Naive thymus-derived CD4-positive, alpha-beta T cell (primary cell): ENCODE measurements at regions of chr2 and their contacts with region 1.

Region 1: DNA sequence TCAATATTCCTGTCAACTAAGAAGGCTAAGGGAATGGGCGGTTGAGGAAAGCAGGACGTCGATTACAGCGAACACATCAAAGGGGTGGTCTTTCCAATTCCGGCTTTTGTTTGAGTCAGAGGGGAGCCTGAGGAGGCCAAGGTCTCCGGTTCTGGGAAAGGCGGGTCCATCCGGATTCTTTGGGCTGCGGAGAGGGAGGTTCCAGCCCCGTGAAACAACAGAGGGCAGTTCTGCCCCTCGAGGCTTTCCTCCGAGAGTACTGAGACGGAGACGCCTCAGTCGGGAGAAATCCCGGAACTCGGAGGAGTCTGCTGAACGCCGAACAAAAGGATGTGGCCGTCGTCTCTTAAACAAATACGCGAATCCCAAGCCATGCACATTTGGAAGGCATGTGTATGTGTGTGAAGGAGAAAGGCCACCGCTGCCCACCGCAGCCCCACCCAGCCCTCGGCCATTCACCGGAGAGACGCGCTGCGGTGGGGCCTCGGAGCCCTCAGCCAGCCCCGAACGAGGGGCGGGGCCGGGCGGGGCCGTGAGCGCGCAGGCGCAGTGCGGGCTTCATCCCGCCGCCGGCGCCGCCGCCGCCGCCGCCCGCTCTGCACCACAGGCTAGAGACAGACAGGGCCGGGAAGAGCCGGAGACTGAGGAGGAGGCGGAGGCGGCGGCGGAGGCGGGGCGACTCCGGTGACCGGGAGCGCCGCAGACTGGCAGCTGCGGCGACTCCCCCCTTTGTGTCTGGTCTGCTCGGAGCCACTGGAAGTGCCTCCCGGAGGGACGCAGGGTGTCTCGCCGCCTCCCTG is at the start of gene BMPR2:
- DNase-seq: peak; percentile 68 to 94 (median 81)
- ATAC-seq: peak; percentile 90
- H3K4me3 ChIP-seq: peak within 1 kb of the TSS; percentile 95
- H3K4me3 Mint-ChIP-seq: peak within 1 kb of the TSS; percentile 94 to 100 (median 98)
- H3K27ac ChIP-seq: peak within 1 kb of the TSS; percentile 81
- H3K27ac Mint-ChIP-seq: peak within 1 kb of the TSS; percentile 82 to 98 (median 92)
- H3K4me1 ChIP-seq: peaks cover 0 to 3% of the 10 kb centered on the region in 2 donors
- H3K4me1 Mint-ChIP-seq: peaks cover 13 to 41% (median 29%) of the 10 kb centered on the region in 7 donors
- H3K27me3 ChIP-seq: no peaks in the 10 kb centered on the region
- H3K27me3 Mint-ChIP-seq: peaks cover 0 to 28% (median 0%) of the 10 kb centered on the region in 5 donors
- total RNA-seq, gene BMPR2: 8.0 to 33.1 (median 15.2) TPM

Region 2: GRCh38 chr2:201780674-201781581 is 594.9 kb before region 1 on chr2 and contains the start of gene ALS2:
- CTCF ChIA-PET with region 1: no interaction called
- POLR2A ChIA-PET with region 1: no interaction called
- intact Hi-C with region 1: loop called (anchors 2 to 5 kb)
- DNase-seq: peak; percentile 91 to 97 (median 95)
- ATAC-seq: peak; percentile 96
- H3K4me3 ChIP-seq: peak within 1 kb of the TSS; percentile 96
- H3K4me3 Mint-ChIP-seq: peak within 1 kb of the TSS; percentile 87 to 99 (median 98)
- H3K27ac ChIP-seq: peak within 1 kb of the TSS; percentile 84
- H3K27ac Mint-ChIP-seq: peak within 1 kb of the TSS; percentile 84 to 99 (median 97)
- H3K4me1 ChIP-seq: peaks cover 7 to 10% of the 10 kb centered on the region in 2 donors
- H3K4me1 Mint-ChIP-seq: peaks cover 5 to 36% (median 21%) of the 10 kb centered on the region in 7 donors
- H3K27me3 ChIP-seq: no peaks in the 10 kb centered on the region
- H3K27me3 Mint-ChIP-seq: peaks cover 0 to 22% (median 0%) of the 10 kb centered on the region in 5 donors
- total RNA-seq, gene ALS2: 8.9 to 13.5 (median 10.7) TPM

Region 3: GRCh38 chr2:202238234-202239197 is 137.3 kb before region 1 on chr2 and contains the start of gene SUMO1:
- CTCF ChIA-PET with region 1: no interaction called
- POLR2A ChIA-PET with region 1: no interaction called
- intact Hi-C with region 1: loop called (anchors 1 to 2 kb)
- DNase-seq: peak; percentile 80 to 95 (median 93)
- ATAC-seq: peak; percentile 98
- H3K4me3 ChIP-seq: peak within 1 kb of the TSS; percentile 82
- H3K4me3 Mint-ChIP-seq: peak within 1 kb of the TSS; percentile 91 to 100 (median 97)
- H3K27ac ChIP-seq: peak within 1 kb of the TSS; percentile 88
- H3K27ac Mint-ChIP-seq: peak within 1 kb of the TSS; percentile 96 to 99 (median 97)
- H3K4me1 ChIP-seq: peaks cover 11% of the 10 kb centered on the region in 2 donors
- H3K4me1 Mint-ChIP-seq: peaks cover 10 to 51% (median 35%) of the 10 kb centered on the region in 7 donors
- H3K27me3 ChIP-seq: no peaks in the 10 kb centered on the region
- H3K27me3 Mint-ChIP-seq: peaks cover 0 to 2% (median 0%) of the 10 kb centered on the region in 5 donors
- total RNA-seq, gene SUMO1: 48.1 to 104 (median 56.8) TPM

Region 4: DNA sequence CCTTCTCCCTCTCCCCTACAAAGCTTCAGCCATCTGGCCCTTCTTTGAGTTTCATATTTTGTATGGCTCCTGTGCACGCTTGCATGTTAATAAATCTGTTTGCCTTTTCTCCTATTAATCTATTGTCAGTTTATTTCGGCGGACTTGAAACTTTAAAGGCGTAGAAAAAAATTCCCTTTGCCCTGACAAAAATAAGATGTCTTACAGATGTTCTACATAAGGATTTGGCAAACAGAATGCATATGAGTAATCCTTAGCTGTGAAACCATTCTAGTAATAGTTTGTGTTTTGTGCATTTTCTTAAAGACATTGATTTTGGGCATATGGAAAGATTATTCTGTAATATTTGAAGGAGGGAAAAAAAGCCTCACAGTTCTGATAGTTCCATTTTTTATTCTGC is 14.7 kb before region 1 on chr2:
- CTCF ChIA-PET with region 1: no interaction called
- POLR2A ChIA-PET with region 1: no interaction called
- intact Hi-C with region 1: no loop called
- DNase-seq: no peak
- ATAC-seq: no peak
- H3K4me3 ChIP-seq: no peak overlapping the region
- H3K4me3 Mint-ChIP-seq: no peak overlapping the region
- H3K27ac ChIP-seq: no peak overlapping the region
- H3K27ac Mint-ChIP-seq: peak overlapping the region in 2 of 9 donors; percentile 5 to 41
- H3K4me1 ChIP-seq: no peaks in the 10 kb centered on the region
- H3K4me1 Mint-ChIP-seq: no peaks in the 10 kb centered on the region
- H3K27me3 ChIP-seq: no peaks in the 10 kb centered on the region
- H3K27me3 Mint-ChIP-seq: peaks cover 0 to 2% (median 0%) of the 10 kb centered on the region in 5 donors

Region 5: GRCh38 chr2:202387608-202388342 is 12.0 kb after region 1 on chr2:
- CTCF ChIA-PET with region 1: no interaction called
- POLR2A ChIA-PET with region 1: no interaction called
- intact Hi-C with region 1: loop called in 1 of 2 experiments (anchors 1 kb)
- DNase-seq: no peak
- ATAC-seq: no peak
- H3K4me3 ChIP-seq: no peak overlapping the region
- H3K4me3 Mint-ChIP-seq: no peak overlapping the region
- H3K27ac ChIP-seq: no peak overlapping the region
- H3K27ac Mint-ChIP-seq: no peak overlapping the region
- H3K4me1 ChIP-seq: no peaks in the 10 kb centered on the region
- H3K4me1 Mint-ChIP-seq: peaks cover 6 to 26% (median 21%) of the 10 kb centered on the region in 7 donors
- H3K27me3 ChIP-seq: no peaks in the 10 kb centered on the region
- H3K27me3 Mint-ChIP-seq: no peaks in the 10 kb centered on the region

Region 6: DNA sequence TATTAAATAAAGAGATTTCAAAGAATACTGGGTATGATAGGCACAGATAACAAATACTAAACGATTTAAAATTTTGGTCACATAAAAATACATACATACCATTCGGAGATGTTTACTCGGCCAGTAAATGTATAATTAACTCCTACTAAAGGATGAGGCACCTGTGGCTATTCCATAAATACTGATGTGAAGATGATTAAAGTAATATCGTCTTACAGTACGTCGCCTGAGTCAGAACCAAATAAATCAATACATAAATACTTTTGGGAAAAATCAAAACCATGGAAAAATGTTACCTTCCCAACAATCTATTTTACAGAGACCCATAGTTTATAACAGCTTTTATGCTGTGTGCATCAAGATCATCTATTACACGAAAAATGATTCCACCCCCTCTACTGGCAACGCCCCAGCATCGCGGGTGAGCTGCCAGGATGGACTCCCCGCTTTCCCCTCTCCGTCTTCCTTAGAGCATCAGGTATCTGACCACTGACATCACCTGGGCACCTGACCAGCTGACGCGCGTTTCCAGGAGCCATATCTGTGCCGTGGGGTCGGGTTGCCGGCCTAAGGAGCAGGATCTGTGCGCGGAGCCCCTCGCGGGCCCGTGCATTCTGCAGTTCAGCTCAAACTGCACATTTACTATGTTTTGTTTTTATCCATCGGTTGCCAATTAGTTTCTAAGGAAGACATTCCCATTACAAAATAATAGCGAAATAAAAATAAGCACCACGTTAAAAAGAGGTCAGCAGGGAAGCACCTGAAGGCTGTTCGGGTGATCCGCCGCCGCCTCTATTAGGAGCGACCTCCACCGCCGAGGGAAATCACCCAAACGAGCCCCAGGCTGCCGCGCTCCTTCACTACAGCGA is 494.9 kb after region 1 on chr2:
- CTCF ChIA-PET with region 1: no interaction called
- POLR2A ChIA-PET with region 1: no interaction called
- intact Hi-C with region 1: loop called in 1 of 2 experiments (anchors 2 kb)
- DNase-seq: peak; percentile 32 to 68 (median 57)
- ATAC-seq: peak; percentile 85
- H3K4me3 ChIP-seq: peak overlapping the region; percentile 84
- H3K4me3 Mint-ChIP-seq: peak overlapping the region; percentile 89 to 98 (median 94)
- H3K27ac ChIP-seq: peak overlapping the region; percentile 60
- H3K27ac Mint-ChIP-seq: peak overlapping the region in 7 of 9 donors; percentile 8 to 84 (median 66)
- H3K4me1 ChIP-seq: peaks cover 0 to 3% of the 10 kb centered on the region in 2 donors
- H3K4me1 Mint-ChIP-seq: peaks cover 0 to 13% (median 7%) of the 10 kb centered on the region in 7 donors
- H3K27me3 ChIP-seq: no peaks in the 10 kb centered on the region
- H3K27me3 Mint-ChIP-seq: no peaks in the 10 kb centered on the region

Region 7: GRCh38 chr2:203014456-203015199 is 638.8 kb after region 1 on chr2 and contains the start of gene NBEAL1:
- CTCF ChIA-PET with region 1: no interaction called
- POLR2A ChIA-PET with region 1: no interaction called
- intact Hi-C with region 1: loop called in 1 of 2 experiments (anchors 1 kb)
- DNase-seq: peak; percentile 88 to 99 (median 90)
- ATAC-seq: peak; percentile 95
- H3K4me3 ChIP-seq: peak within 1 kb of the TSS; percentile 92
- H3K4me3 Mint-ChIP-seq: peak within 1 kb of the TSS; percentile 90 to 97 (median 95)
- H3K27ac ChIP-seq: peak within 1 kb of the TSS; percentile 92
- H3K27ac Mint-ChIP-seq: peak within 1 kb of the TSS; percentile 84 to 98 (median 94)
- H3K4me1 ChIP-seq: peaks cover 5 to 14% of the 10 kb centered on the region in 2 donors
- H3K4me1 Mint-ChIP-seq: peaks cover 18 to 48% (median 41%) of the 10 kb centered on the region in 7 donors
- H3K27me3 ChIP-seq: no peaks in the 10 kb centered on the region
- H3K27me3 Mint-ChIP-seq: peaks cover 0 to 19% (median 0%) of the 10 kb centered on the region in 5 donors
- total RNA-seq, gene NBEAL1: 11.6 to 15.9 (median 12.6) TPM

Region 8: DNA sequence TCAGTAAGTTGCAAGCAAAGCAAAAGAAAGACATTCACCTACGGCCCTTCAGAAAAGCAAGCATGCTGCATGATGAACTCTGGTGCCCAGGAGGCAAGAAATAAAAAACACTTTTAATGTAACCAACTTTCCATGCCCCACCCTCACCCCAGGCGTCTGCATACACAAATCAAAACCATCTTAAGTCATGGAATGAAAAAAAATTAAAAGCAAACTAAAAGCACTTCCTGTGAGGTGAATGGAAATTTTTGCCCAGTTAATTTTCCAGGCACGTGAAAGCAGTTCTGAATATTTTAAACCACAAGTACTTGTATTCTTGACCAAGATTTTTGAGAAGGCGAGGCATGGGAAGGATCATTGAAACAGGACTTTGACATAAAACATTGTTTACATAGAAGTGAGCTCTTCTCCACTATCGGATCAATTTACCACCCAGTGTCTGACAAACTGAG is 1558.3 kb after region 1 on chr2:
- CTCF ChIA-PET with region 1: no interaction called
- POLR2A ChIA-PET with region 1: no interaction called
- intact Hi-C with region 1: loop called in 1 of 2 experiments (anchors 10 kb)
- DNase-seq: peak in 8 of 9 donors; percentile 37 to 80 (median 60)
- ATAC-seq: peak; percentile 31
- H3K4me3 ChIP-seq: peak overlapping the region; percentile 22
- H3K4me3 Mint-ChIP-seq: peak overlapping the region; percentile 69 to 92 (median 78)
- H3K27ac ChIP-seq: peak overlapping the region; percentile 71
- H3K27ac Mint-ChIP-seq: peak overlapping the region; percentile 87 to 97 (median 93)
- H3K4me1 ChIP-seq: peaks cover 40 to 42% of the 10 kb centered on the region in 2 donors
- H3K4me1 Mint-ChIP-seq: peaks cover 33 to 68% (median 55%) of the 10 kb centered on the region in 7 donors
- H3K27me3 ChIP-seq: no peaks in the 10 kb centered on the region
- H3K27me3 Mint-ChIP-seq: no peaks in the 10 kb centered on the region